Sigmoid colon (tissue), 7 donors: ENCODE measurements at regions of chr10 and their contacts with region 1.

Region 1: DNA sequence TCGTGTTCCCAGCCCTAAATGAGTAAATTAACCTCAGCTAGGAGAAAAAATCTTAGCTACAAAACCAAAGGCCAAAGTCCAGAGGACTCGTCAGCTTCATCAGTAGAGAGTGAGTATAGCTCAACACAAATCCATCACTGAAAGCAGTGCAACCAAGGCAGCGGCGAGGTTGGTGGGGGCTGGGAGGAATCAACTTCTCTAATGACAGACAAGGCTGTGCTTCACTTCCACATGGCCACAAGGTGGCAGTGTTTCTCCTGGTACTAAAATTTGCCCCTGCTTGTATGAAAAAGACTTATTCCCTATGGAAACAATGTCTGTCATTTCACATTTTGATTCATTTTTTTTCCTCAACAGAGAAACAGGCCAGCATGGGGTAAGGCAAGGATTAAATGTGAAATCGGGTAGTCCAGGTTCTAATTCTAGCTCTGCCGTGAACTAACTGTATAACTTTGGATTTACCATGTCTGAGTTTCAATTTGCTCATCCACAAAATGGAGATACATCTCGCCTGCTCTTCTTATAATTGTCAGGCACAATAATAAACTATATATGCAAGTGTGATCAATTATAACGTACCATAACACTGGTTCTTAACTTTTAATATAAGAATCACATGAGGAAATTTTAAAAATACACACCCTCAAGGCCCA is 39.3 kb downstream of the FAS start:
- DNase-seq: peak; percentile 88
- H3K4me3 ChIP-seq: no peak overlapping the region
- H3K27ac ChIP-seq: no peak overlapping the region
- H3K4me1 ChIP-seq: peaks cover 0 to 22% (median 4%) of the 10 kb centered on the region in 4 donors
- H3K27me3 ChIP-seq: no peaks in the 10 kb centered on the region
- CTCF ChIP-seq: peak; percentile 76 to 90 (median 84)
- EP300 ChIP-seq: no peak
- POLR2A ChIP-seq: no peak

Region 2: GRCh38 chr10:89213191-89213808 is 183.4 kb after region 1 on chr10:
- intact Hi-C with region 1: loop called (anchors 1 kb)
- DNase-seq: no peak
- H3K4me3 ChIP-seq: no peak overlapping the region
- H3K27ac ChIP-seq: no peak overlapping the region
- H3K4me1 ChIP-seq: peaks cover 0 to 14% (median 7%) of the 10 kb centered on the region in 4 donors
- H3K27me3 ChIP-seq: peaks cover 0 to 26% (median 1%) of the 10 kb centered on the region in 3 donors
- CTCF ChIP-seq: peak; percentile 55 to 69 (median 58)
- EP300 ChIP-seq: no peak
- POLR2A ChIP-seq: no peak

Region 3: DNA sequence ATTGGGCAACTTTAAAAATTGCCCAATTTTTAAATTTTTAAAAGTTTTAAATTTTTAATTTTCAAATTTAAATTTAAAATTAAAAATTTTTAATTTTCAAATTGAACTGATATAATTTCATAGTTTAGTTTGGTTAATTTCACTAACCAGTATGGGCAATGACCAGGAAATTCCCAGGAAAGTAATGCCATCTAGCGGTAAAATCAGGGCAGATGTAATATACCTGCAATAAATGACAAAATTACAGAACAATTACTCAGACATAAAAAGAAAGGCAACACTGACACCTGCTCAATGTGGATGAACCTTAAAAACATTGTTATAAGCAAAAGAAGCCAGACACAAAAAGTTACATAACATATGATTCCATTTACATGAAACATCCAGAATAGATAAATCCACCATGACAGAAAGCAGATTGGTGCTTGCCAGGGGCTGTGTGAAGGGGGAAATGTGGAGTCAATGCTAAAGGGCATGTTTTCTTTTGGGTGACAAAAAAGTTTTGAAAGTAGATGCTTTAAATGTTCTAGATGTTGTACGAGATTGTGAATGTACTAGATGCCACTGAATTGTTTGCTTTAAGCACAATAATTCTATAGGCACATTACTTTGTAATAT is 534.1 kb after region 1 on chr10:
- intact Hi-C with region 1: loop called (anchors 10 kb)
- DNase-seq: no peak
- H3K4me3 ChIP-seq: no peak overlapping the region
- H3K27ac ChIP-seq: no peak overlapping the region
- H3K4me1 ChIP-seq: no peaks in the 10 kb centered on the region
- H3K27me3 ChIP-seq: no peaks in the 10 kb centered on the region
- CTCF ChIP-seq: peak; percentile 58 to 81 (median 69)
- EP300 ChIP-seq: no peak
- POLR2A ChIP-seq: no peak